H1 (cell line): ENCODE measurements at regions of chr2 and their contacts with region 1.

Region 1: DNA sequence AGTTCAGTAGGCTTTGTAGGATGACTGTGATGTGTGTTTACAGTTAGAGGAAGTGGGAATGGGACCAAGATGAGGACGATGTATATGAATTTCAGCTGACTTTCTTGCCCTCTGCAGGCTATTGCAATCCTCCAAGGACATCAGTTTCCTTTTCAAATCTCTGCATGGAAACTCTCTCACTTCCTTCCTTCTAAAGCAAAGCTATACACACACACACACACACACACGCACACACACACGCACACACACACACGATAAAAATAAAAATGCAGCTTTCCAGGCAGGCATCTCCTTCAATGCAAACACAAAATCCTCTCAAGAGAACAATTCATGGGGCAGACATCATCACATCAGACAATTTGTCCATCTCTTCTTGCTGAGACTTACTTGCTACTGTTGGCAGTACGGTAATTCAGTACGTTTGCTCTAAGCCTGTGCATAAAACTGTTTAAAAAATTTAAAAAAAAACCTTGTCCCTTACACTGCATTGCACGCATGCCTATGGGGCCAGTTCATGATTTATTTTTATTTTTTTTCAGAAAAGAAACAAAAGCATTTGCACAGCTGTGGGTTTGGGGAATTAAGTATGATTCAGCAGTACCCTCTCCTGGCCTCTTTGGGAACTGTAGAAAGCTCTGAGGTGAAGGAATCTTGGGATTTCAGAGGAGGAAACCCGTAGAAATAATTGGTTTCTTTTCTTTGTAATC is 27.1 kb upstream of the ICOS start:
- DNase-seq: peak in 1 of 2 experiments; percentile 57
- H3K4me3 ChIP-seq: no peak overlapping the region
- H3K27ac ChIP-seq: no peak overlapping the region
- H3K4me1 ChIP-seq: no peaks in the 10 kb centered on the region
- H3K27me3 ChIP-seq: no peaks in the 10 kb centered on the region
- CTCF ChIP-seq: peak in 2 of 3 experiments; percentile 59 to 66; a peak in 3 of 4 replicates
- EP300 ChIP-seq: no peak
- POLR2A ChIP-seq: no peak
- RAD21 ChIP-seq: peak; percentile 84 to 86

Region 2: DNA sequence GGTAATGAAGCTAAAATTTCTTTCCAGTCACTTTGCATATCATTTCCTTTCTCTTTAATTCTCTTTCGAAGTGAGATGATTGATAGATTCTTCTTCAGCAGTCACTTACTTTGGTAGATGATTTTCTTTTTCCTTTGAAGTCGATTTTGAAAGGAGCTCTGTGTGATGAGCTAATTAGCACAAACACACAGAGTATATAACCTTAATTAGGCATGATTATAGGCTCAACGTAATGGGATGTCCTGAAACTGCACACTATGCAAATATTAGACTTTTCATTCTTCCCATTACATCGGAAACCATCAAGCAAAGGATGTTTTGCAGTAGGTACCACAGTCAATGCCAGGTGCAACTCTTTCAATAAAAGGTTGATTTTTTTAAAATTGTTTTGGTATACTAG is 48.2 kb before region 1 on chr2:
- CTCF ChIA-PET with region 1: interaction called, 11 read pairs
- POLR2A ChIA-PET with region 1: no interaction called
- DNase-seq: no peak
- H3K4me3 ChIP-seq: no peak overlapping the region
- H3K27ac ChIP-seq: no peak overlapping the region
- H3K4me1 ChIP-seq: no peaks in the 10 kb centered on the region
- H3K27me3 ChIP-seq: no peaks in the 10 kb centered on the region
- CTCF ChIP-seq: no peak
- EP300 ChIP-seq: no peak
- POLR2A ChIP-seq: no peak
- RAD21 ChIP-seq: no peak

Region 3: DNA sequence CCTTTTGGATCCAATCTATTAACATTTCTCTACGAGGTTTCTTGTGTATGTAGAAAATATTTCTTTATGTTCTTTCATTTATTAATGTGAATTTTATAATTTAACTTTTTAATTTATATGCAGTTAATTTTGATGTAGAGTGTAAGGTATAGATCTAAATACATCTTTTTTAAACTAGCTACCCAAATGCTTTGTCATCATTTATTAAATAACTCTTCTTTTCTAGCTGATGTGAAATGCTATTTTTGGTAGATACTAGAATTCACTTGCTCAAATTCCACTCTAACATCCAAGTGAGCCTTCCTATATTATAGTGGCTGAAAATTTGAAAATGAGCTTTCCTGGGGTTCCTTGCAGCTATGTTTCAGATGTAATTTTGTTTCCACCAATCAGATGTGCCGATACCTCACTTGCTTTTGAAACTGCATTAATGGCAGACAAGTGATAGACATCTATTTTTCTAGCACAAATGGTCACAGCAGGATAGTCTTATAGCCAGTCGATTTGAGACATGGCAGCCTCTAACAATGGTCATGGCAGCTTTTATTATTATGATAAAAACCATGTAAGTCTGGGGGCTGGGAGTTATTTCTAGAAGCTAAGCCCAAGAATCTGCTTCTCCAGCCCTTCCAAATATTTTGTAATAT is 16.2 kb after region 1 on chr2:
- CTCF ChIA-PET with region 1: no interaction called
- POLR2A ChIA-PET with region 1: no interaction called
- DNase-seq: no peak
- H3K4me3 ChIP-seq: no peak overlapping the region
- H3K27ac ChIP-seq: no peak overlapping the region
- H3K4me1 ChIP-seq: no peaks in the 10 kb centered on the region
- H3K27me3 ChIP-seq: no peaks in the 10 kb centered on the region
- CTCF ChIP-seq: no peak
- EP300 ChIP-seq: no peak
- POLR2A ChIP-seq: no peak
- RAD21 ChIP-seq: no peak